Mucosa of descending colon (tissue), 3 donors: ENCODE measurements at regions of chrX and their contacts with region 1.

Region 1: GRCh38 chrX:70030301-70030767 is 19.4 kb downstream of the AWAT2 start:
- DNase-seq: peak in 1 of 3 donors; percentile 10
- ATAC-seq: peak; percentile 82
- H3K4me3 ChIP-seq: no peak overlapping the region
- H3K4me1 ChIP-seq: no peaks in the 10 kb centered on the region
- CTCF ChIP-seq: no peak

Region 2: GRCh38 chrX:69153060-69153730 is 877.1 kb before region 1 on chrX:
- intact Hi-C with region 1: no loop called
- DNase-seq: peak in 1 of 3 donors; percentile 17
- ATAC-seq: peak; percentile 43
- H3K4me3 ChIP-seq: no peak overlapping the region
- H3K4me1 ChIP-seq: no peaks in the 10 kb centered on the region
- CTCF ChIP-seq: no peak

Region 3: GRCh38 chrX:69531031-69531755 is 499.1 kb before region 1 on chrX:
- intact Hi-C with region 1: loop called (anchors 5 to 10 kb)
- DNase-seq: no peak
- ATAC-seq: no peak
- H3K4me3 ChIP-seq: no peak overlapping the region
- H3K4me1 ChIP-seq: no peaks in the 10 kb centered on the region
- CTCF ChIP-seq: no peak

Region 4: DNA sequence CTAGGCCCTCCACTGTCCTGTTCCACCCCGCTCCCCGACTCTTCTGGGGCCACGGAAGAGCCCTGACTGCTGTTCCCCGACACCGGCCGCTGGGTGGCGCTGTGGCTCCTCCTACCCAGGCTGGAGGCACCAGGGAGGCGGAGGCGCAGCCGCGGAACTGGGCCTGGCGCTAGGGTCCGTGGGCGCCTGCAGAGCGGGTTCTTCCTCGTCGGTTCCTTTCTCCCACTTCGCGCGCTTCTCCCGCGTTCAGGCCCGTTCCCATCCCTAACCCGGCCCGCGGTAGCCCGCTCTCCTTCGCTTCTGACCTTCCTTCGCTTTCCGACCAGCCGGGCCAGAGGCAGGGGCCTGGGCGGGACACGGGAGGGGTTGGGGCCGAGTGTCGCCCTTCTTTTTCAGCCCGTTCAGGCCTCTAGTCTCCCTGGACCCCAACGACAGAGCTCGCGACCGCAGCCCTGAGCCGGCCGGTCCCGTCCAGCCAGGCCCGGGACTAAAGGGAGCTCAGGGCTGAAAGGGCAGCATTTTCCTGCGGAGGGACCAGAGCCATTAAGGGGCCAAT is 491.9 kb before region 1 on chrX:
- intact Hi-C with region 1: loop called (anchors 5 to 10 kb)
- DNase-seq: peak; percentile 71 to 81 (median 74)
- ATAC-seq: peak; percentile 95
- H3K4me3 ChIP-seq: no peak overlapping the region
- H3K4me1 ChIP-seq: peaks cover 3% of the 10 kb centered on the region
- CTCF ChIP-seq: peak; percentile 62

Region 5: DNA sequence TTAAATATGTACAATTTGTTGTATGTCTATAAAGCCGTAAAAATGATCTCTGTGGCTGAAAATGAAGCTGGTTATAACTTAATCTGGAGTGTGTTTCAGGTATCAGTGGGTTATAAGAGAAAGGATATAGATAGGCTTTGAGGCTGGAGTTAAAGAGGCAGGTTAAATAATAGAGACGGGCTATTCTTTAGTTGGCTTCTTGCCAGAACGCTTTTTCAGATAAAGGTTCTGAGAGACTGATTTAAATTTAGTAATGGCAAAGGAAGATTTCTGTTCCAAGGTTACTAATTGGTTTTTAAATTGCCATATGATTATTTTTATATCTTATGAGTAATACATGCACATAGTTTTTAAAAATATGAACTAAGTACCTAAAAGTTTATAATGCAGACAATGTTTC is 98.0 kb before region 1 on chrX:
- intact Hi-C with region 1: no loop called
- DNase-seq: no peak
- ATAC-seq: no peak
- H3K4me3 ChIP-seq: no peak overlapping the region
- H3K4me1 ChIP-seq: no peaks in the 10 kb centered on the region
- CTCF ChIP-seq: no peak

Region 6: GRCh38 chrX:70219938-70220767 is 189.8 kb after region 1 on chrX:
- intact Hi-C with region 1: no loop called
- DNase-seq: peak; percentile 32 to 55 (median 47)
- ATAC-seq: peak; percentile 97
- H3K4me3 ChIP-seq: no peak overlapping the region
- H3K4me1 ChIP-seq: no peaks in the 10 kb centered on the region
- CTCF ChIP-seq: no peak